ENCODE measurements at regions of chr12 and their contacts with region 1.

Region 1: DNA sequence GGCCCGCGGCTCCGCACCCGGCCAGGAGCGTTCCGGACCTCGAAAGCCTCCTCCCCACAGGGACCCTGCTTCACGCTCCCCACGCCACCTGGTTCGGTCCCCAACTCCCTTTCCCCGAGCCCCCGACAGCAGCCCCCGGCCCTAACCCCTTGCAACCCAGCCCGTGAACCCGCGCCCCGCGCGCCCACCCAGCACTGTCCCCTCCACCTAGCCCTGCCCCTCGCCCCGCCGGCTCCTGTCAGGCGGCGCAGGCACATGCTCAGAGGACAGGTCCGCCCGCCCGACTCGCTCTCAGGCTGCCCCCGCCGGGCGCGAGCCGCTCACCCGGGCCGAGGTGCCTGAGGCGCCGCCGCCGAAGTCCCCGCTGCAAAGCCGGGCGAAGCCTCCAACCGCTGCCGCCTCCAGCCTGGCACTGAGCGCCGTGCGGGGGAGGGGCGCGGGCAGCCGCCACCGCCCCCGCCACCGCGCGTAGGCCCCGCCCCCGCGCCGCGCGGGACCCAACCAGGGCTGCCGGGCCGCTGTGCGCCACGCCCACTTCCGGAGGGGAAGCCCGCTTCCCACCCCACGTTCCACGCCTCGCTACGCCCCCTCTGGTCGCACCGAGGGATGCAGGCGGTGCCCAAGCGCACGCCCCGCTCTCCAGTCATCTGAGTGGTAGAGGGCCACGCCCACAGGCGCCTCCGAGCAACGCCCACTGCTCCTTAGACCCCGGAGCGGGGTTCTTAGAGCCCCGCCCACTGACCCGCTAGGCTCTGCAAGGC is at the start of gene CORO1C:
- DNase-seq: peak; percentile 98 to 99 (median 98)
- ATAC-seq: peak; percentile 76 to 88 (median 86)
- H3K4me3 ChIP-seq: peak within 1 kb of the TSS; percentile 73 to 91 (median 86)
- H3K27ac ChIP-seq: peak within 1 kb of the TSS; percentile 91 to 99 (median 96)
- H3K4me1 ChIP-seq: peaks cover 0 to 58% (median 28%) of the 10 kb centered on the region in 12 donors
- H3K27me3 ChIP-seq: no peaks in the 10 kb centered on the region
- CTCF ChIP-seq: peak; percentile 78 to 97 (median 90)
- POLR2A ChIP-seq: peak; percentile 82 to 91
- total RNA-seq, gene CORO1C: 48.3 to 119 (median 68.5) TPM

Region 2: DNA sequence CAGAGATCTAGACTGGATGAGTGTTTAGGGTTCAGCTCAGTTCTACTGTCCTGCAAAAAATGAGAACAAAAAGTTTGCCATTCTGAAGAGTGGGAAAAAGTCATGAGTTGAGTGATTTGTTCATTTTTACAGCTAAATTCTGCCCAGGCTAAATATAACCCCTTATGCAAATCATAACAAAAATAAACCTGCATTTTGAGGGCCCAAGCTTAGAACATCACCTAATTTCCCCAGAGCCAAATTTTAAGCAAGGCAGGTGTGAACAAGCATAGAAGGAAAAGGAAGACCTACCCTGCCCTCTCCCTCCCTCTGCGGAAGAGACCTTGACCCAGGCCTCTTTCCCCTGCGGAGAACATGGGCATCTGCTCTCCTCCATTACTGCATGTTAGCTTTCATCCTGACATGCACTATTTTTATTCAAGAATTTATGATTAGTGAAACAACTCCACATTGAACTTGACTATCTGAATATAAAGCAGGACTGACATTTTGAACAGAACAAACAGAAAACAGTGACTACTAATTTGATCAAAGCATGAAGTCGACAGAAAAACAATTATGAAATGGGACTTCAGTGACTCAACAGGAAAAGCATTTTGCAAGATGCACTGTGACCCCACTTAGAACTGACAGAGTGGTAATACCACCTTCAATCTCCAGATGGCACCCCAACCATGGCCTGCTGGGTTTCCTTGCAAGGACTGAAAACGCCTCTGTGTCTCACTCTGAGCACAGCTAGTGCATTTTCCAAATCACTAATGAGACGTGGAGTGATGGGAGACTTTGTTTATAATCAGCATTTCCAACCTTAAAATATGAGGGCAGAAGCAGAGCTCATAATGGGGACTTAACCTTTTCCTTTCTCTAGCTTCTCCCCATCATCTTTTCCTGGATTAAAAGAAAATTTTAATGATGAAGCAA is 66.7 kb before region 1 on chr12:
- intact Hi-C with region 1: loop called in 6 of 10 experiments (anchors 1 to 10 kb)
- DNase-seq: peak; percentile 76 to 87 (median 84)
- ATAC-seq: peak; percentile 85 to 93 (median 92)
- H3K4me3 ChIP-seq: peak overlapping the region in 1 of 12 donors; percentile 12
- H3K27ac ChIP-seq: peak overlapping the region; percentile 62 to 88 (median 80)
- H3K4me1 ChIP-seq: peaks cover 17 to 60% (median 50%) of the 10 kb centered on the region in 12 donors
- H3K27me3 ChIP-seq: no peaks in the 10 kb centered on the region
- CTCF ChIP-seq: peak; percentile 88 to 98 (median 96)
- POLR2A ChIP-seq: peak in 1 of 2 donors; percentile 28

Region 3: DNA sequence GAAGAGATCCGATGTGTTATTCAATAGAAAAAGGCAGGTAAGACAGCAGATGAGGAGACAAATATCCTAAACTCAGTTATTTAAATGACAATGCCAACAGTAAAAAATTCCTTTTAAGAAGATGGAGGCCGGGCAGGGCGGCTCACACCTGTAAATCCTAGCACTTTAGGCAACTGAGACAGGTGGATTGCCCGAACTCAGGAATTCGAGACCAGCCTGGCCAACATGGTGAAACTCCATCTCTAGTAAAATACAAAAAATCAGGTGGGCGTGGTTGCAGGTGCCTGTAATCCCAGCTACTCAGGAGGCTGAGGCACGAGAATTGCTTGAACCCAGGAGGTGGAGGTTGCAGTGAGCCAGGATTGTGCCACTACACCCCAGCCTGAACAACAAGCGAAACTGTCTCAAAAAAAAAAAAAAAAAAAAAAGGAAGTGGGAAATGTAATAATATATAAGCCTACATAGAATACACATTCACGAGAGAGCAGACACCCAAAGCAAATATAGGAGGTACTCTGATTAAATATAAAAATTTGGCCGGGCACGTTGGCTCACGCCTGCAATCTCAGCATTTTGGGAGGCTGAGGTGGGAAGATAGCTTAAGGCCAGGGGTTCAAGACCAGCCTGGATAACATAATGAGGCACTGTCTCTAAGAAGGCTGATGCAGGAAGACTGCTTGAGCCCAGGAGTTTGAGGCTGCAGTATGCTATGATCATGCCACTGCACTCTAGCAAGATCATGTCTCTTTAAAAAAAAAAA is 18.9 kb before region 1 on chr12:
- intact Hi-C with region 1: loop called in 1 of 10 experiments (anchors 2 kb)
- DNase-seq: no peak
- ATAC-seq: peak in 1 of 4 donors; percentile 17
- H3K4me3 ChIP-seq: peak overlapping the region in 1 of 12 donors; percentile 0
- H3K27ac ChIP-seq: peak overlapping the region in 10 of 12 donors; percentile 3 to 61 (median 36)
- H3K4me1 ChIP-seq: peaks cover 0 to 88% (median 56%) of the 10 kb centered on the region in 12 donors
- H3K27me3 ChIP-seq: no peaks in the 10 kb centered on the region
- CTCF ChIP-seq: no peak
- POLR2A ChIP-seq: no peak

Region 4: DNA sequence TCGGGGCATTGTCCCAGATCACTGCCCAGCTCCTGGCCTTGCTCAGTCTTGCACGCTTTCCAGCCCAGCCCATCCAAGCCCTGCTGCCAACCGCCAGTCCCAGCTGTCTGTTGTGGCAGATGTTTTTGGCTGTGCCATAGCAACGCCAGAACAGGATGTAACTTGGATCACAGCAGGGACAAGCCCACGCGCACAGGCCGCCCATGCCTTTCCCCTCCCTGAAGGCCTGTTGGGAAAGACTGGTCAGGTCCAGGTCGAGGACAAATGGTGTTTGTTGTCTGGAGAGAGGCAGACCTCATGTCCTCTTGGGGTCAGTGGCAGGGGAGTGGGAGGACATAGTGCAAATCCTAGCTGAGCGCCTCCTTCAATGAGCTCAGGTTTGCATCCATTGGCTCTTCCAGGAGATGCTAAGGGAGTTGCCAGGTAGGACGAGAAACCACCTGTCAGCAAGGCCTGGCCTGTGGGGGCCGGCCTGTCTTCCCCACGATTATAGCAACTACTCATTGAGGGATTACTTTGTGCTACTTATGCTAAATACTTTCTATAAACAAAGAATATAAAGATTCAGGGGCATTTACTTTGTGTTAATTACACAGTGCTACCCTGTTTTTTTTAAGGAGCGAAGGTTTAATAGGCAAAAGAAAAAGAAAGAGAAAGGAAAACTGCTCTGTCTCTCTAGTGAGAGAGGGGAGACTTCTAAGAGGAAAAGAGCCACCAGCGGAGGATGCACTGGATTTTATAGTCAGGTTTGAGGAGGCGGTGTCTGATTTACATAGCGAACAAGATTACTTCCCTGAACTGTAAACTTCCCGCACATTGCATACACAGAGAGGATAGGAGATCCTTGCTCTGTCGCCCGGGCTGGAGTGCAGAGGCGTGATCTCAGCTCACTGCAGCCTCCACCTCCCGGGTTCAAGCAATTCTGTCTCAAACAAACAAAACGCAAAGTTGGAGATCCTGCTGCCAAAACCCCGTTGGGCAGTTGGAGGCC is 42.8 kb after region 1 on chr12:
- intact Hi-C with region 1: loop called in 8 of 10 experiments (anchors 5 kb)
- DNase-seq: peak; percentile 85 to 97 (median 89)
- ATAC-seq: peak; percentile 95 to 98 (median 96)
- H3K4me3 ChIP-seq: no peak overlapping the region
- H3K27ac ChIP-seq: peak overlapping the region; percentile 56 to 89 (median 78)
- H3K4me1 ChIP-seq: peaks cover 3 to 49% (median 31%) of the 10 kb centered on the region in 12 donors
- H3K27me3 ChIP-seq: no peaks in the 10 kb centered on the region
- CTCF ChIP-seq: no peak
- POLR2A ChIP-seq: peak in 1 of 2 donors; percentile 44

Region 5: GRCh38 chr12:108803428-108804105 is 72.3 kb after region 1 on chr12:
- intact Hi-C with region 1: loop called in 5 of 10 experiments (anchors 1 to 5 kb)
- DNase-seq: peak in 4 of 5 donors; percentile 78 to 82 (median 81)
- ATAC-seq: peak; percentile 69 to 79 (median 72)
- H3K4me3 ChIP-seq: peak overlapping the region in 4 of 12 donors; percentile 39 to 48 (median 40)
- H3K27ac ChIP-seq: peak overlapping the region; percentile 65 to 96 (median 88)
- H3K4me1 ChIP-seq: peaks cover 10 to 88% (median 59%) of the 10 kb centered on the region in 12 donors
- H3K27me3 ChIP-seq: no peaks in the 10 kb centered on the region
- CTCF ChIP-seq: peak; percentile 87 to 99 (median 97)
- POLR2A ChIP-seq: no peak

Region 6: DNA sequence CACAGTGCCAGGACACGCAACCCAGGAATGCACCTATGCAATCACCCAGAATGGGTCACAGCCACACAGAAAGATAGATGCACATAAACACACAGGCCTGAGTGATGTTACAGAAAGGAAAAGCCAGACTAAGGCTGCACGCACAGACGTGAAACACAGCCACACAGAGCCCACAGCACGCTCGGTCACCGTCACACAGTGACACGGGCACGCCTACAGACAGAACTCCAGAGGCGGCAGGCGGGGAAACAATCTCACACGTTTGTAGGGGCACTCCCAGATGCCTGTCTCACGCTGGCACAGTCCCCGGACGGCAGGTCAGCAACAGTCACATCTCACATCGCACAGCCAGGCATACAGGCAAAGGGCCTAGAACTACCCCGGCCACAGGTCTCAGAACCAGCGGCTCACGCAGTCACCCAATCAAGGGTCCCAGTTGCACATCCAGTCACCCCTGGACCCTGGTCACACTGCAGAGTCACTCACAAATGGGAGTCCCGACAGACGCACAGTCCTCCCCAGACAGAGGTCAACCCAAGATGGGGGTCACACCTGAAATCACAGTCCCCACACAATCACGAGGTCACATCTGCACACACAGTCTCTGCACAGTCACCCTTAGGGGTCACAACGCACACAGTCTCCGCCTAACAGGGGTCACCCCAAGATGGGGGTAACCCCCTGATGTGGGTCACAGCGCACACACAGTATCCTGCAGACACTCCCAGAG is 125.3 kb after region 1 on chr12:
- intact Hi-C with region 1: loop called in 5 of 10 experiments (anchors 5 to 10 kb)
- DNase-seq: peak; percentile 80 to 93 (median 86)
- ATAC-seq: peak; percentile 41 to 63 (median 60)
- H3K4me3 ChIP-seq: peak overlapping the region; percentile 62 to 98 (median 88)
- H3K27ac ChIP-seq: peak overlapping the region; percentile 86 to 99 (median 96)
- H3K4me1 ChIP-seq: peaks cover 12 to 82% (median 57%) of the 10 kb centered on the region in 12 donors
- H3K27me3 ChIP-seq: no peaks in the 10 kb centered on the region
- CTCF ChIP-seq: no peak
- POLR2A ChIP-seq: peak in 1 of 2 donors; percentile 44